Posterior vena cava (tissue), 2 donors: ENCODE measurements at regions of chr13 and their contacts with region 1.

Region 1: GRCh38 chr13:26074706-26075105 is 22.9 kb upstream of the SHISA2 start:
- DNase-seq: no peak

Region 2: DNA sequence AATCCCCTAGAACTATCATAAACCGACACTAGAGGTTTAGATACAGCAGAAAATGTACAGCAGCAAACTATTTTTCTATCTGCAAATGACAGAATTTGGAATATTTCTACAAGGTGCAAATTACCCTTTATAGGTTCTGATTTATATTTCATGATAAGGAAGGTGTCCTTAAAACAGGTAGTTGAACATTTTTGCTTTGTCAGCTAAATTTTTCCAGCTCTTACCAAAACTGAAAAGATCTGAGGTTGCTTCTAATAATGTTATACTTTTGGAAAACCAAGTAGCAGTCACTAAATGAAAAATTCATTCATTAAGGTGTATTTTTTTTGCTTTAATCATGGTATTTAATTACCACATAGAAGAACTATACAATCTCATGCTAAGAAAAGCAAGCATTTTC is 31.9 kb before region 1 on chr13:
- intact Hi-C with region 1: loop called in 1 of 2 experiments (anchors 2 kb)
- DNase-seq: no peak

Region 3: GRCh38 chr13:26198110-26198509 is 123.4 kb after region 1 on chr13:
- intact Hi-C with region 1: no loop called
- DNase-seq: no peak

Region 4: GRCh38 chr13:27022571-27023311 is 948.0 kb after region 1 on chr13:
- intact Hi-C with region 1: no loop called
- DNase-seq: no peak